ENCODE measurements at regions of chr11 and their contacts with region 1.

Region 1: GRCh38 chr11:6389921-6390724 is at the start of gene SMPD1:
- DNase-seq: peak; percentile 90 to 97 (median 94)
- ATAC-seq: peak; percentile 88
- H3K4me3 ChIP-seq: peak within 1 kb of the TSS; percentile 84 to 90
- H3K4me3 Mint-ChIP-seq: peak within 1 kb of the TSS; percentile 93
- H3K27ac ChIP-seq: peak within 1 kb of the TSS; percentile 85 to 95
- H3K27ac Mint-ChIP-seq: peak within 1 kb of the TSS; percentile 98
- H3K4me1 ChIP-seq: peaks cover 52% of the 10 kb centered on the region
- H3K4me1 Mint-ChIP-seq: peaks cover 68% of the 10 kb centered on the region
- H3K27me3 ChIP-seq: no peaks in the 10 kb centered on the region
- H3K27me3 Mint-ChIP-seq: no peaks in the 10 kb centered on the region
- CTCF ChIP-seq: no peak
- total RNA-seq, gene SMPD1: 53.4 to 53.7 TPM

Region 2: DNA sequence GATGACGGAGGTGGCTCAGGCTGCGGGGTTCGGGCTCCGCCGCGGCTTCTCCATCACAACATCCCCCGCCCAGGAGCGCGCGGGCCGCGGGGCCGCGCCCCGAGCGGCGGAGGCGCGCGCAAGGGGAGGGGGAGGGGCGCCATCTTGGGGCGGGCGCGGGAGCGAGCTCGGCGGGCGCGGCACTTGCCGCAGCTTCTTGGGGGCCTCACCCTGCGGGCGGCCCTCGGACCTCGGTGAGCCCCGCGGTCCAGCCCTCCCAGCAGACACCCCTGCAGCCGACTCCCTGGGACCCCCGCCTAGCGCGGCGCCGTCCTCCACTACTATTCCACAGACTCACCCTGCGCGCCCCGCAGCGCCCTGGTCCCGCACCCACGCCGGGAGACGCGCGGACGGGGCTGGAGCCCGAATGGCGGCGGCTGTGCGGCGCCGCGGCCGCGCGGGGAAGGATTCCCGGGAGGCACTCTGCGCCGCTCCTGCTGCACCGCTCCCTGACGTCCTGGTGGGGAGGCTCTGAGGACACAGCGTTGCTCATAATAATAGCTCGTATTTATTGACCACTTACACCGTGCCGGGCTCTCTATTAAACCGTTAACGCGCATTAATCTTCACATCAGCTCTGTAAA is 29.0 kb after region 1 on chr11 and contains the start of gene APBB1:
- CTCF ChIA-PET with region 1: interaction called, 8 read pairs
- POLR2A ChIA-PET with region 1: interaction called, 26 read pairs
- intact Hi-C with region 1: loop called (anchors 1 kb)
- DNase-seq: peak; percentile 49 to 88 (median 77)
- ATAC-seq: peak; percentile 69
- H3K4me3 ChIP-seq: peak within 1 kb of the TSS; percentile 51 to 81
- H3K4me3 Mint-ChIP-seq: peak within 1 kb of the TSS; percentile 84
- H3K27ac ChIP-seq: peak within 1 kb of the TSS; percentile 48 to 82
- H3K27ac Mint-ChIP-seq: peak within 1 kb of the TSS; percentile 89
- H3K4me1 ChIP-seq: peaks cover 46% of the 10 kb centered on the region
- H3K4me1 Mint-ChIP-seq: peaks cover 10% of the 10 kb centered on the region
- H3K27me3 ChIP-seq: no peaks in the 10 kb centered on the region
- H3K27me3 Mint-ChIP-seq: peaks cover 3% of the 10 kb centered on the region
- CTCF ChIP-seq: no peak
- total RNA-seq, gene APBB1: 130 to 147 TPM

Region 3: GRCh38 chr11:6505577-6506240 is 115.6 kb after region 1 on chr11:
- CTCF ChIA-PET with region 1: interaction called, 23 read pairs
- POLR2A ChIA-PET with region 1: no interaction called
- intact Hi-C with region 1: no loop called
- DNase-seq: peak in 3 of 9 experiments; percentile 9 to 64 (median 51)
- ATAC-seq: peak; percentile 61
- H3K4me3 ChIP-seq: no peak overlapping the region
- H3K4me3 Mint-ChIP-seq: no peak overlapping the region
- H3K27ac ChIP-seq: no peak overlapping the region
- H3K27ac Mint-ChIP-seq: no peak overlapping the region
- H3K4me1 ChIP-seq: no peaks in the 10 kb centered on the region
- H3K4me1 Mint-ChIP-seq: peaks cover 4% of the 10 kb centered on the region
- H3K27me3 ChIP-seq: no peaks in the 10 kb centered on the region
- H3K27me3 Mint-ChIP-seq: no peaks in the 10 kb centered on the region
- CTCF ChIP-seq: peak; percentile 73

Measured in CD8-positive, alpha-beta T cell (primary cell).